ENCODE measurements at regions of chr4 and their contacts with region 1.

Region 1: DNA sequence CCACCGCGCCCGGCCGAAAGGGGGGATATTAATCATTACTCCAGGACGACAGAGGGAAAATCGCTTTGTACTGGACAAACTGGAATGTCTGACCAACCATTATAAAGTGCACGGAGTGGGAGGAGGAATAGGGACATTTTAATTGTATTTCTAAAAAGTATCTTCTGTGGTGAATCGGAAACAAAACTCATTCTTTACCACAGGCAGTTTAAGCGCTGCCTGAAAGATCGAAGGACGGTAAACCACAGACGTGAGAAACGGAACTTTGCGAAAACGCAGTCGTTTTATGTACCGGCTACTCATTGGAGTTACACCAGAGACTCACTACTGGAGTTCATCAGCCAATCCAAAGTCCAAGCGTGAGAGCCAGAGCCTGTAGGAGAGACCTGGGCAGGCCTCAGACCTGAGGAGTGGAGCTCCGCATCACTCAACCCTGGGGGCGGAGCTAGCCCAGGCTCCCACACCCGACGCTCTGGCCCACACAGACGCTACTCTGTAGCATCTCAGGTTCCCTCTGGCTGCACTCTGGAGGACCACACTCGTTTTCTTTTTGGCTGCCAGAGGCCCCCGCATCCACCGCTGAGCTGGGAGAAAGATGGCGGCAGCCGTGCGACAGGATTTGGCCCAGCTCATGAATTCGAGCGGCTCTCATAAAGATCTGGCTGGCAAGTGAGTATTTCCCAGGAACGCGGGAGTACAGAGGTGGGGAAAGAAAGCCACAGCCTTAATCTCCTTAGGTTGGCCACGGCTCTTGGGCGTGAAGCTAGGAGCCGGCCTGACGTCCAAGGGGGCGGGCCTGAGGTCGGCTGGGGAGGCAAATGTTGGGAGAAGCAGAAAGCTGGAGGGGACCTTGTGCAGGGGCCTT is at the start of gene COPS4:
- H3K4me3 ChIP-seq: peak within 1 kb of the TSS; percentile 89
- H3K27ac ChIP-seq: peak within 1 kb of the TSS; percentile 54
- H3K4me1 ChIP-seq: no peaks in the 10 kb centered on the region
- CTCF ChIP-seq: 0 out of 2 replicates have a peak, but pooled peaks have one; percentile 17

Region 2: GRCh38 chr4:83012687-83013419 is 22.0 kb before region 1 on chr4:
- CTCF ChIA-PET with region 1: no interaction called
- POLR2A ChIA-PET with region 1: interaction called, 58 read pairs
- H3K4me3 ChIP-seq: peak overlapping the region; percentile 70
- H3K27ac ChIP-seq: peak overlapping the region; percentile 79
- H3K4me1 ChIP-seq: no peaks in the 10 kb centered on the region; the same call in 1 of the 2 replicates
- CTCF ChIP-seq: peak; percentile 76

Region 3: DNA sequence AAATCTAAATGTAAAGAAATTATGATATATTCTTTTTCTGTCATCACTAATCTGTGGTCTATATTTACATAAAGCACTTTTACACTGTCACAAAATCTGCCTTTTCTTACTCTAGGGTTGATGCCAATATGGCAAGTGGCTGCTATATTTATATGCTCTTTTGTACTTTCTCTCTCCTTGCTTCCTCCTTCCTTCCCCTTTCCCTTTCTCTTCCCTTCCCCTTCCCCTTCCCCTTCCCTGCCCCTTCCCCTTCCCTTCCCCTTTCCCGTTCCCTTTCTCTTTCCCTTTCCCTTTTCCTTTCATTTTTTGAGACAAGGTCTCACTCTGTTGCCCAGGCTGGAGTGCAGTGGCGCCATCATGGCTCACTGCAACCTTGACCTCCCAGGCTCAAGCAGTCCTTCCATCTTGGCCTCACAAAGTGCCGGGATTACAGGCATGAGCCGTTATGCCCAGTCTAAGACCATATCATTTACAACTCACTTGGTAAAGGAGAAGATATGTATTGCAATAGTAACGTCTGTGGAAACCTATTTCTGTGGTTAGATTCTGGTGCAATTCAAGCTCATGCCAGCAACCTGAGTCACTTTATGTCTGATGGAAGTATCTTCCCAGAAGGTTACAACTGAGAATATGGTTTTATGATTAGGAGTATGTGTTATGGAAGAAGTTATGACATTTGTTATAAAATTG is 93.5 kb after region 1 on chr4:
- CTCF ChIA-PET with region 1: no interaction called
- POLR2A ChIA-PET with region 1: no interaction called
- H3K4me3 ChIP-seq: no peak overlapping the region
- H3K27ac ChIP-seq: no peak overlapping the region
- H3K4me1 ChIP-seq: no peaks in the 10 kb centered on the region
- CTCF ChIP-seq: no peak